CD8-positive, alpha-beta T cell (primary cell): ENCODE measurements at regions of chr16 and their contacts with region 1.

Region 1: GRCh38 chr16:21959050-21959449 is 5.9 kb downstream of the UQCRC2 start:
- DNase-seq: no peak
- ATAC-seq: no peak
- H3K4me3 ChIP-seq: no peak overlapping the region
- H3K4me3 Mint-ChIP-seq: no peak overlapping the region
- H3K27ac ChIP-seq: no peak overlapping the region
- H3K27ac Mint-ChIP-seq: no peak overlapping the region
- H3K4me1 ChIP-seq: peaks cover 11% of the 10 kb centered on the region
- H3K4me1 Mint-ChIP-seq: peaks cover 36% of the 10 kb centered on the region
- H3K27me3 ChIP-seq: no peaks in the 10 kb centered on the region
- H3K27me3 Mint-ChIP-seq: no peaks in the 10 kb centered on the region
- CTCF ChIP-seq: no peak

Region 2: GRCh38 chr16:21982108-21982507 is 23.1 kb after region 1 on chr16:
- CTCF ChIA-PET with region 1: no interaction called
- POLR2A ChIA-PET with region 1: no interaction called
- intact Hi-C with region 1: loop called in 1 of 2 experiments (anchors 2 kb)
- DNase-seq: no peak
- ATAC-seq: peak; percentile 55
- H3K4me3 ChIP-seq: no peak overlapping the region
- H3K4me3 Mint-ChIP-seq: no peak overlapping the region
- H3K27ac ChIP-seq: no peak overlapping the region
- H3K27ac Mint-ChIP-seq: no peak overlapping the region
- H3K4me1 ChIP-seq: no peaks in the 10 kb centered on the region
- H3K4me1 Mint-ChIP-seq: no peaks in the 10 kb centered on the region
- H3K27me3 ChIP-seq: no peaks in the 10 kb centered on the region
- H3K27me3 Mint-ChIP-seq: no peaks in the 10 kb centered on the region
- CTCF ChIP-seq: no peak